ENCODE measurements at regions of chr4 and their contacts with region 1.

Region 1: DNA sequence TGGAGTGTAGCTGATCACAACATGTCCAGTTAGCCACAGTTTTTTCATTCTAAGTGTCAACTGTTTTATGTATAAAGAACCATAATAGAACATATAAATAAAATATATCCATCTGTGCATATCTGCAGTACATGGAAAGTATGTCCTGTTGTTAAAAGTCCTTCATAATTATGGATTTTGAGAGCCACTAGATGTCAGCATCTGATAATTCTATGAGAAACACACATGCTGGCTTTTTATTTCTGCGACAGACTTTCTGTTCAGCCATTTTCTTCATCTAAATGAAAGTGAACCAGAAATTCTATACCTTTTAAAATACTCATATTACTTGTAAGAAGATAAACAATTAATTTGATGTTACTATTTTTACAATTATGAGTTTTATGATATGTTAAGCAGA is 251.5 kb downstream of the GPM6A start:
- DNase-seq: no peak
- ATAC-seq: no peak
- H3K4me3 ChIP-seq: no peak overlapping the region
- H3K27ac ChIP-seq: no peak overlapping the region
- H3K4me1 ChIP-seq: no peaks in the 10 kb centered on the region
- H3K27me3 ChIP-seq: no peaks in the 10 kb centered on the region
- CTCF ChIP-seq: no peak
- POLR2A ChIP-seq: no peak

Region 2: DNA sequence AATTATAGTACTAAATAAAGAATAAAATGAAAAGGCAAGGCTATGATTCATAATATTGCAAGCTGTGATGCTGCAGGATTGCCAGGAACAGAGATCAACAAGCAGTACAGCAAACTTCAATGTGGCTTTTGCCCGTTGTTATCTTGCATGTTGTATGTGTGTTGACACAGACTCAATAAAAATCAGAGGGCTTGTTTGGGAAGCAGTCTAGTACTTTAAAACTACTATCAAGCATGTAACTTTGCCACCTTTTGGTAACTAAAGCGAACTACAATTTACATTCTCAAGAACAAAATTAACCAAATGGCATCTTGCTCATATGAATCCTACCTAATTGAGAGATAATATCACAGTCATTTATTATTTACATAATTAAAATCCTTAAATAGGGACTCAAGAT is 331.2 kb after region 1 on chr4:
- in situ Hi-C with region 1: loop called in 1 of 4 experiments (anchors 25 kb)
- intact Hi-C with region 1: no loop called
- DNase-seq: no peak
- ATAC-seq: no peak
- H3K4me3 ChIP-seq: no peak overlapping the region
- H3K27ac ChIP-seq: no peak overlapping the region
- H3K4me1 ChIP-seq: no peaks in the 10 kb centered on the region
- H3K27me3 ChIP-seq: no peaks in the 10 kb centered on the region
- CTCF ChIP-seq: no peak
- POLR2A ChIP-seq: no peak